Left cardiac atrium (tissue), 4 donors: ENCODE measurements at regions of chr7 and their contacts with region 1.

Region 1: GRCh38 chr7:38932509-38933168 is 23.6 kb upstream of the VPS41 start:
- DNase-seq: peak; percentile 68
- ATAC-seq: no peak

Region 2: DNA sequence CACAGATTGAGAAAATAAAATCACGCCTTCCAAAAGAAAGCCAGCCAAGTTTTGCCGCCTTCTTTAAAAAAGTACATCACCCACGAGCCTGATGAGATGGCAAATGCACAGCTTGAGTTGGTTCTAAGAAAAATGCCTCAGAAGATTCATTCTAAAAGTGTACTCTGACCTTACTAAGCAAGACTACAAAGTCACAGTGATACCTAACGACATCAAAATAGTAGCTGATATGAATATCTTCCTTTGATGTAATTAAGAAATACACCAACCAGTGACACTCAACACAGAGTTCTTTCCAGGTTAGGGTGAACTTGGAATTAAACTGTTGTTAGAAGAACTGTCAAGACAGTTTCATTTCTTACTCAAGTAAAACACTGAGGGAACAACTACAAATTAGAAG is 223.5 kb before region 1 on chr7:
- intact Hi-C with region 1: no loop called
- DNase-seq: no peak
- ATAC-seq: no peak

Region 3: GRCh38 chr7:38796626-38797501 is 135.8 kb before region 1 on chr7:
- intact Hi-C with region 1: loop called in 1 of 2 experiments (anchors 10 kb)
- DNase-seq: peak; percentile 32
- ATAC-seq: no peak

Region 4: GRCh38 chr7:39465055-39465929 is 532.7 kb after region 1 on chr7:
- intact Hi-C with region 1: loop called (anchors 2 to 5 kb)
- DNase-seq: peak; percentile 34
- ATAC-seq: peak; percentile 75 to 77

Region 5: GRCh38 chr7:39517240-39517639 is 584.6 kb after region 1 on chr7:
- intact Hi-C with region 1: loop called (anchors 5 kb)
- DNase-seq: no peak
- ATAC-seq: no peak

Region 6: GRCh38 chr7:39527296-39527695 is 594.7 kb after region 1 on chr7:
- intact Hi-C with region 1: loop called in 1 of 2 experiments (anchors 5 kb)
- DNase-seq: no peak
- ATAC-seq: no peak